B cell (primary cell): ENCODE measurements at regions of chr14 and their contacts with region 1.

Region 1: GRCh38 chr14:101889898-101890297 is 74.5 kb upstream of the DYNC1H1 start:
- DNase-seq: peak; percentile 27
- ATAC-seq: no peak
- H3K4me3 ChIP-seq: no peak overlapping the region
- H3K4me3 Mint-ChIP-seq: no peak overlapping the region
- H3K27ac ChIP-seq: no peak overlapping the region
- H3K27ac Mint-ChIP-seq: no peak overlapping the region
- H3K4me1 ChIP-seq: no peaks in the 10 kb centered on the region
- H3K4me1 Mint-ChIP-seq: no peaks in the 10 kb centered on the region
- H3K27me3 ChIP-seq: no peaks in the 10 kb centered on the region
- H3K27me3 Mint-ChIP-seq: no peaks in the 10 kb centered on the region
- CTCF ChIP-seq: peak; percentile 19

Region 2: GRCh38 chr14:101774006-101774795 is 115.7 kb before region 1 on chr14:
- CTCF ChIA-PET with region 1: interaction called, 10 read pairs
- POLR2A ChIA-PET with region 1: interaction called, 3 read pairs
- intact Hi-C with region 1: loop called (anchors 1 kb)
- DNase-seq: peak; percentile 70
- ATAC-seq: peak; percentile 66
- H3K4me3 ChIP-seq: no peak overlapping the region
- H3K4me3 Mint-ChIP-seq: peak overlapping the region; percentile 36
- H3K27ac ChIP-seq: peak overlapping the region; percentile 54 to 63
- H3K27ac Mint-ChIP-seq: peak overlapping the region; percentile 93
- H3K4me1 ChIP-seq: peaks cover 40 to 55% of the 10 kb centered on the region in 2 donors
- H3K4me1 Mint-ChIP-seq: peaks cover 57% of the 10 kb centered on the region
- H3K27me3 ChIP-seq: no peaks in the 10 kb centered on the region
- H3K27me3 Mint-ChIP-seq: no peaks in the 10 kb centered on the region
- CTCF ChIP-seq: no peak

Region 3: GRCh38 chr14:101903111-101903561 is 13.2 kb after region 1 on chr14:
- CTCF ChIA-PET with region 1: no interaction called
- POLR2A ChIA-PET with region 1: no interaction called
- intact Hi-C with region 1: no loop called
- DNase-seq: no peak
- ATAC-seq: no peak
- H3K4me3 ChIP-seq: no peak overlapping the region
- H3K4me3 Mint-ChIP-seq: no peak overlapping the region
- H3K27ac ChIP-seq: no peak overlapping the region
- H3K27ac Mint-ChIP-seq: no peak overlapping the region
- H3K4me1 ChIP-seq: no peaks in the 10 kb centered on the region
- H3K4me1 Mint-ChIP-seq: no peaks in the 10 kb centered on the region
- H3K27me3 ChIP-seq: no peaks in the 10 kb centered on the region
- H3K27me3 Mint-ChIP-seq: no peaks in the 10 kb centered on the region
- CTCF ChIP-seq: no peak